MCF 10A (cell line): ENCODE measurements at regions of chr6 and their contacts with region 1.

Region 1: DNA sequence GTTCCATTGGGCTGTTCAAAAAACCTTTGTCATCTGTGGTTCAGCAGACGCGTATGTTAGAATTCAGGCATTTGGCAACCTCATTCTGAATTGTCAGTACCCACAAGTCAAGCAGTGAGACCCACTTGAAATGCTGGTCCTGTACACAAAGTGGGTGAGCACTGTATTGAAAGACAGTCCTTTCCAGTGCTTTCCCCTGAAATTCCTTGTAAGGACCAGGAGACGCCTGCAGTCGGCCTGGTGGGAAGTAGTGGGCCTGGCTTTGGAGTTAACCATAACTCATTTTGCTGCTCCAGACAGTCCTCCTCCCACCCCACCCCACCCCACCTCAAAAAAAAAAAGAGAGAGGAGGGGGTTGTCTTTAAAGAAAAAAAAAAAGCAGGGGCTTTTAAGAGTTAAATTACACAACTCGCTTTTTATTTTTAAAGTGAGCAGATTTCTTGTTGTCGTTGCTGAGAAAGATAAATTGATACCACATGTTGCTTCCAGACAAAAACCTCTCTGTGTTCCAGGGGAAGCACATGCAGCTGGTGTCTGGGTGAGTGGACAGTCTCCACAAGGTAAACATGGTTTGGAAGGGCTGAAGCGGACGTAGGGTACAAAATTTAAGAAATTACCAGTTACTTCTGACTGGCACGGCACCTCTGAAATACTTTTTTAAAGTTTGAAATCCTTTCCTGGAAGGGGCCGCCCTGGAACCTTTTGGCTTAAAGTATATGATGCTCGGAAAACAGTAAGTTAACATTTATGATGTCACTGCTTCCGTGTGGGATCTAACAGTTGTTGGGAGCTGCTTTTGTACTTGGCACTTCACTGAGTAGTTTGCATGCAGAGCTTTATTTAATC is 95.3 kb downstream of the FOXO3 start:
- DNase-seq: no peak
- H3K4me3 Mint-ChIP-seq: no peak overlapping the region
- H3K27ac Mint-ChIP-seq: peak overlapping the region; percentile 83
- H3K4me1 Mint-ChIP-seq: peaks cover 58% of the 10 kb centered on the region
- H3K27me3 Mint-ChIP-seq: no peaks in the 10 kb centered on the region
- CTCF ChIP-seq: no peak

Region 2: DNA sequence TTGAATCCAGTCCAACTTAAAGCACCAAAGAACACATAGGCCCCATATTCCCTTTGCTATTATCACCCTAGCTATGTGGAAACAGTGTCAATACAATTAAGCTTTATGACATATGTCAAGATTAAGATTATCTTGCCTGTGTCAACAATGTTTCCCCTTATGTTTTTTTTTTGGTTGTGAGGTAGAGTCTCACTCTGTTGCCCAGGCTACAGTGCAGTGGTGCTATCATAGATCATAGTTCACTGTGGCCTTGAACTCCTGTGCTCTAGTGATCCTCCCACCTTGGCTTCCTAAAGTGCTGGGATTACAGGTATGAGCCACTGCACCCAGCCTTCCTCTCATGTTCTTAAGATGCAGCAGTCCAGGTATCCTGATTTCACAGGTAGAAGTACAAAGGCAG is 343.4 kb before region 1 on chr6:
- CTCF ChIA-PET with region 1: no interaction called
- POLR2A ChIA-PET with region 1: no interaction called
- intact Hi-C with region 1: no loop called
- DNase-seq: no peak
- H3K4me3 Mint-ChIP-seq: no peak overlapping the region
- H3K27ac Mint-ChIP-seq: no peak overlapping the region
- H3K4me1 Mint-ChIP-seq: peaks cover 6% of the 10 kb centered on the region
- H3K27me3 Mint-ChIP-seq: no peaks in the 10 kb centered on the region
- CTCF ChIP-seq: no peak

Region 3: DNA sequence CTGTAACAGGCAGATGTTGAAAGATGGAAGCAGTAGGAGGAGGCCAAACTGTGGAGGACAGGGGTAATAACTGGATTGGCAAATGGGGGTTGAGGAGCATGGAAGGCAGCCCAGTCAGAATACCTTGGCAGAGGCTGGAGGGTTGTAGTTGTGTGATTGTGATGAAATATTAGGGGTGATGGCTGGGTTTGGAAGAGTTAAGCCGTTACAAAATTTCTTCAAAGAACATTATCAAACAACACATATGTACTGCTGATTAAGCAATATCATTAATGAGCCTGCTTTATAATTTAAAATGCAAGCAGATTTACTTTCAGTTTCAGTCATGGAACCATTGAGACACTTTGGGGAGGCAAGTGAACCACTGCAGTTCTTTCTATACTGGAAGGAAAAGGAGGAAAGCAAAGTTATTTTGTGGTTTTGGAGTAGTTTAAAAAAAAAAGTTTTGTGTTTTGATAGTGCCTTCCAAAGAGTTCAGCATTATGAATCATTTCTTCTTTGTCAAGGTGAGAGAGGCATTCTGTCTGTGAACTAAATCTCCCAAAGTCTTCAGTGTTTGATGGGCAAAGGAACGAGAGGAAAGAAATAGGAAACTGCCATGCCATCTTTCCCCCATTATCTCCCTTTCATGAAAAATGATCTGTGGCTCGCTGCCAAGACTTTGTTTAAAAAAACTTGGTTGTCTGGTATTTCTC is 74.6 kb before region 1 on chr6:
- CTCF ChIA-PET with region 1: no interaction called
- POLR2A ChIA-PET with region 1: interaction called, 10 read pairs
- intact Hi-C with region 1: no loop called
- DNase-seq: peak; percentile 96
- H3K4me3 Mint-ChIP-seq: peak overlapping the region; percentile 67
- H3K27ac Mint-ChIP-seq: peak overlapping the region; percentile 50
- H3K4me1 Mint-ChIP-seq: peaks cover 76% of the 10 kb centered on the region
- H3K27me3 Mint-ChIP-seq: no peaks in the 10 kb centered on the region
- CTCF ChIP-seq: no peak

Region 4: GRCh38 chr6:108598305-108598863 is 57.6 kb before region 1 on chr6:
- CTCF ChIA-PET with region 1: no interaction called
- POLR2A ChIA-PET with region 1: interaction called, 19 read pairs
- intact Hi-C with region 1: no loop called
- DNase-seq: no peak
- H3K4me3 Mint-ChIP-seq: peak overlapping the region; percentile 29
- H3K27ac Mint-ChIP-seq: peak overlapping the region; percentile 64
- H3K4me1 Mint-ChIP-seq: peaks cover 42% of the 10 kb centered on the region
- H3K27me3 Mint-ChIP-seq: no peaks in the 10 kb centered on the region
- CTCF ChIP-seq: no peak

Region 5: DNA sequence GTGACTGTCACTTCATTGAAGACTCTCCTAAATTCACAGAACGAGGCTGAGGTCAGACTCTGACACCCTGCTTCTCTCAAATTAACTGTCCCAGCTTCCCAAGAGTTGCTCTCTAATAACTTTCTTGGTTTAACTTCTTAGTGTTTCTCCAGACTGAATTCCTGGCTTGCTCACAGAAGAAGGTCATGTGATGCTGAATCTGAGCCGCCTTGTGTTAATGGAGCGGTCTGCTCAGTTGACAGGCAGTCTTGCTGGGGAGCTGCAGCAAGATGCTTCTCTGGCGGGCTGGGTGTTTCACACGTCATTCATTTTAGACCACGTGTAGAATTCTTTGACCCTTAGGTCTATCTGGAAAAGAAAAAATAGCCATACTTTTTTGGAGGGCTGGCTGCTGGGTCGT is 12.0 kb after region 1 on chr6:
- CTCF ChIA-PET with region 1: interaction called, 4 read pairs
- POLR2A ChIA-PET with region 1: interaction called, 12 read pairs
- intact Hi-C with region 1: no loop called
- DNase-seq: no peak
- H3K4me3 Mint-ChIP-seq: no peak overlapping the region
- H3K27ac Mint-ChIP-seq: no peak overlapping the region
- H3K4me1 Mint-ChIP-seq: peaks cover 21% of the 10 kb centered on the region
- H3K27me3 Mint-ChIP-seq: no peaks in the 10 kb centered on the region
- CTCF ChIP-seq: no peak

Region 6: DNA sequence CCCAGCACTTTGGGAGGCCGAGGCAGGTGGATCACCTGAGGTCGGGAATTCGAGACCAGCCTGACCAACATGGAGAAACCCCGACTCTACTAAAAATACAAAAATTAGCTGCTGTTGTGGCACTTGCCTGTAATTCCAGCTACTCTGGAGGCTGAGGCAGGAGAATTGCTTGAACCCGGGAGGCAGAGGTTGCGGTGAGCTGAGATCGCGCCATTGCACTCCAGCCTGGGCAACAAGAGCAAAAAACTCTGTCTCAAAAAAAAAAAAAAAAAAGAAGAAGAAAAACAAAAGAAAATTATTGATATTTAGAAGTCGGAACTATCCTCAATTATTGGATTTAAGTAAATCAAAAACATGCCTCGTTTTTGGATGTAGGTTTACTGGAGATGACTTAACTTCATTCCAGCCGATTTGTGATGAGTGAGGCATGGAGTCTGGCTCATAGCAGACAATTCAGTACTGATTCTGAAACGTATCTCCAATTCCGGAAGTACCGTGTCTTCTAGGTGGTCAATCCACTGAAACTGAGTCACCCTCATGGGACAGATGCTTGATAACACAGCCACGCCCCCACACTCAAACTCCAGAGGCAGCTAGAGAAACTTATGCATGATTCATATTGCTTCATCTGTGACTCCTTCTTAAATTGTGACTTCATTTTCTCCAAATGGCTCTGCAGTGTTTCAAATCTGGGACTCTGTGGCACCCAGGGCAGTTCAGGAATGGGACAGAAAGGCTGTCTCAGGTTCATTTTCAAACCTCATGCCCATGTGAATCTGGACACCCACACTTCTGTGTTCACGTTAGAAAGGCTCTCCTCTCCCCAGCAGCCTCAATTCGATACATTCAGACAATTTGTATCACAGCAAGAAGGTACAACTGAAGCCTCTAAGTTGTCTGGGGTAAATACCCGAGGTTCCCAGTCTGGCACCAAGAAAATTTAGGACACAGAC is 81.8 kb after region 1 on chr6:
- CTCF ChIA-PET with region 1: no interaction called
- POLR2A ChIA-PET with region 1: interaction called, 3 read pairs
- intact Hi-C with region 1: loop called (anchors 5 kb)
- DNase-seq: peak; percentile 78
- H3K4me3 Mint-ChIP-seq: no peak overlapping the region
- H3K27ac Mint-ChIP-seq: peak overlapping the region; percentile 18
- H3K4me1 Mint-ChIP-seq: peaks cover 51% of the 10 kb centered on the region
- H3K27me3 Mint-ChIP-seq: no peaks in the 10 kb centered on the region
- CTCF ChIP-seq: no peak